Right cardiac atrium (tissue), 5 donors: ENCODE measurements at regions of chr13 and their contacts with region 1.

Region 1: GRCh38 chr13:48233046-48233907 is at the start of gene ITM2B:
- DNase-seq: peak; percentile 84 to 93 (median 93)
- ATAC-seq: peak; percentile 93
- H3K4me3 ChIP-seq: peak within 1 kb of the TSS; percentile 77
- H3K27ac ChIP-seq: peak within 1 kb of the TSS; percentile 98
- H3K4me1 ChIP-seq: peaks cover 2% of the 10 kb centered on the region
- H3K27me3 ChIP-seq: no peaks in the 10 kb centered on the region
- total RNA-seq, gene ITM2B: 585 to 643 (median 613) TPM

Region 2: GRCh38 chr13:47158593-47158992 is 1074.7 kb before region 1 on chr13:
- intact Hi-C with region 1: no loop called
- DNase-seq: no peak
- ATAC-seq: no peak
- H3K4me3 ChIP-seq: no peak overlapping the region
- H3K27ac ChIP-seq: no peak overlapping the region
- H3K4me1 ChIP-seq: no peaks in the 10 kb centered on the region
- H3K27me3 ChIP-seq: no peaks in the 10 kb centered on the region

Region 3: GRCh38 chr13:48094781-48095502 is 138.3 kb before region 1 on chr13 and contains the start of gene MED4:
- intact Hi-C with region 1: loop called in 2 of 4 experiments (anchors 10 kb)
- DNase-seq: peak; percentile 95 to 99 (median 98)
- ATAC-seq: peak; percentile 98
- H3K4me3 ChIP-seq: peak within 1 kb of the TSS; percentile 97
- H3K27ac ChIP-seq: peak within 1 kb of the TSS; percentile 88
- H3K4me1 ChIP-seq: peaks cover 3% of the 10 kb centered on the region
- H3K27me3 ChIP-seq: no peaks in the 10 kb centered on the region
- total RNA-seq, gene MED4: 40.2 to 50.0 (median 49.2) TPM

Region 4: DNA sequence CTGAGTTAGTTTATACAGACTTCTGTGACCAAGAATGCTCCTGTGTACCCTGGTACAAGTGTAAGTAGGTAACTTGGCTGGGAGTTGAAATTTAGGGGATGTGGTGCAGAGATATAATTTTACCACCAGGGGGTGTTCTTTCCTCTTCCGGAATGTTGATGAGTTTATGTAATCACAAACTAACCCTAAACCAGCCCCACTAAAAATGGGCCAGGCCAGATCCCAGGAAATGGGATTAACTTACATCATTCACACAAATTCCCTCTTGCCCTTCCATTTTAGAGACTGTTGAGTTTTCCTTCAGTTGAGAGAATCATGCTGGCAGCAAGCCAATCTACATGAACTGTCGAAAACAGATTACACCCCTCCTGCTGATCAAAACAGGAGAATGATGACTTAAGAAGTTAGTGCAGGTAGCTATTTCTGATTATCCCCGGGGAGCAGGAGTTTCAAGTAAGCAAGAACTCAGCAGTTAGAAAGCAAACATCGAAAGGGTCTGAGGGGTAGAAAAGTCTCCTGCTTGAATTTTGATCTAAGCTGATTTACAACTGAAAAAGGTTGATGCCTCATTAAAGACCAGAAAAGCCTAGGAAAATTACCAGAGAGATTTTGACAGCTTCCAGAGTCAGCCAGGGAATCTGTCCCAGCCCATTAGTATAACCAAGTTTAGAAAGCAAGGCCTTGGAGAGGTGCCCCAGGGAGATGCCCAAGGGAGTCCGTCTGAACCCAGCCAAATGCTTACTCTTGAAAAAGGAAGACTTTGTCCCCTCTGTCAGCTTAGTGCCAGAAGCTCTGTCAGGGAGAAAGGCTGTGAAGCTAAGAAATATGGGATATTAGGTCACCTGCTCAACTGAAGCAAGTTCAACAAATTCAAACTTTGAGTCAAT is 106.1 kb before region 1 on chr13:
- intact Hi-C with region 1: loop called (anchors 5 to 10 kb)
- DNase-seq: peak; percentile 83 to 94 (median 92)
- ATAC-seq: peak; percentile 81 to 88
- H3K4me3 ChIP-seq: no peak overlapping the region
- H3K27ac ChIP-seq: peak overlapping the region; percentile 82
- H3K4me1 ChIP-seq: peaks cover 4% of the 10 kb centered on the region
- H3K27me3 ChIP-seq: no peaks in the 10 kb centered on the region

Region 5: GRCh38 chr13:48303359-48304142 is 70.3 kb after region 1 on chr13 and contains the start of gene RB1:
- intact Hi-C with region 1: loop called in 2 of 4 experiments (anchors 10 kb)
- DNase-seq: peak; percentile 97 to 98 (median 97)
- ATAC-seq: peak; percentile 97
- H3K4me3 ChIP-seq: peak within 1 kb of the TSS; percentile 82
- H3K27ac ChIP-seq: peak within 1 kb of the TSS; percentile 98
- H3K4me1 ChIP-seq: peaks cover 3% of the 10 kb centered on the region
- H3K27me3 ChIP-seq: no peaks in the 10 kb centered on the region
- total RNA-seq, gene RB1: 21.8 to 29.0 (median 27.3) TPM